CD8-positive, alpha-beta memory T cell (primary cell): ENCODE measurements at regions of chr1 and their contacts with region 1.

Region 1: GRCh38 chr1:92831762-92832536 is at the start of gene RPL5:
- DNase-seq: peak; percentile 95 to 99 (median 98)
- H3K4me3 ChIP-seq: peak within 1 kb of the TSS; percentile 69
- H3K4me3 Mint-ChIP-seq: peak within 1 kb of the TSS; percentile 93 to 99 (median 98)
- H3K27ac ChIP-seq: peak within 1 kb of the TSS; percentile 90
- H3K27ac Mint-ChIP-seq: peak within 1 kb of the TSS; percentile 94 to 100 (median 98)
- H3K4me1 ChIP-seq: peaks cover 44% of the 10 kb centered on the region
- H3K4me1 Mint-ChIP-seq: peaks cover 45 to 56% (median 49%) of the 10 kb centered on the region in 3 donors
- H3K27me3 ChIP-seq: no peaks in the 10 kb centered on the region
- H3K27me3 Mint-ChIP-seq: peaks cover 0 to 2% of the 10 kb centered on the region in 2 donors
- total RNA-seq, gene RPL5: 1,428 to 1,468 TPM

Region 2: GRCh38 chr1:92817986-92818764 is 13.8 kb before region 1 on chr1:
- CTCF ChIA-PET with region 1: interaction called, 12 read pairs
- POLR2A ChIA-PET with region 1: interaction called, 4 read pairs
- DNase-seq: no peak
- H3K4me3 ChIP-seq: no peak overlapping the region
- H3K4me3 Mint-ChIP-seq: no peak overlapping the region
- H3K27ac ChIP-seq: no peak overlapping the region
- H3K27ac Mint-ChIP-seq: no peak overlapping the region
- H3K4me1 ChIP-seq: no peaks in the 10 kb centered on the region
- H3K4me1 Mint-ChIP-seq: no peaks in the 10 kb centered on the region
- H3K27me3 ChIP-seq: no peaks in the 10 kb centered on the region
- H3K27me3 Mint-ChIP-seq: peaks cover 11 to 29% of the 10 kb centered on the region in 2 donors

Region 3: GRCh38 chr1:92842082-92843045 is 10.4 kb after region 1 on chr1:
- CTCF ChIA-PET with region 1: interaction called, 10 read pairs
- POLR2A ChIA-PET with region 1: interaction called, 7 read pairs
- DNase-seq: no peak
- H3K4me3 ChIP-seq: no peak overlapping the region
- H3K4me3 Mint-ChIP-seq: no peak overlapping the region
- H3K27ac ChIP-seq: no peak overlapping the region
- H3K27ac Mint-ChIP-seq: peak overlapping the region in 5 of 8 donors; percentile 1 to 80 (median 29)
- H3K4me1 ChIP-seq: peaks cover 31% of the 10 kb centered on the region
- H3K4me1 Mint-ChIP-seq: peaks cover 33 to 43% (median 40%) of the 10 kb centered on the region in 3 donors
- H3K27me3 ChIP-seq: no peaks in the 10 kb centered on the region
- H3K27me3 Mint-ChIP-seq: no peaks in the 10 kb centered on the region